Activated CD4-positive, alpha-beta T cell treated with anti-CD3 and anti-CD28 coated beads for 36 hours (primary cell): ENCODE measurements at regions of chr21 and their contacts with region 1.

Region 1: GRCh38 chr21:15586752-15587445 is 142.9 kb upstream of the USP25 start:
- DNase-seq: no peak
- ATAC-seq: no peak
- H3K4me3 Mint-ChIP-seq: no peak overlapping the region
- H3K27ac Mint-ChIP-seq: no peak overlapping the region
- H3K4me1 Mint-ChIP-seq: no peaks in the 10 kb centered on the region
- H3K27me3 Mint-ChIP-seq: no peaks in the 10 kb centered on the region

Region 2: GRCh38 chr21:14864211-14865021 is 722.5 kb before region 1 on chr21:
- CTCF ChIA-PET with region 1: interaction called, 3 read pairs
- POLR2A ChIA-PET with region 1: no interaction called
- intact Hi-C with region 1: loop called in 1 of 2 experiments (anchors 5 kb)
- DNase-seq: peak; percentile 77
- ATAC-seq: peak; percentile 88
- H3K4me3 Mint-ChIP-seq: no peak overlapping the region
- H3K27ac Mint-ChIP-seq: no peak overlapping the region
- H3K4me1 Mint-ChIP-seq: peaks cover 6% of the 10 kb centered on the region
- H3K27me3 Mint-ChIP-seq: peaks cover 2% of the 10 kb centered on the region

Region 3: GRCh38 chr21:15210235-15210739 is 376.6 kb before region 1 on chr21:
- CTCF ChIA-PET with region 1: no interaction called
- POLR2A ChIA-PET with region 1: no interaction called
- intact Hi-C with region 1: no loop called
- DNase-seq: no peak
- ATAC-seq: no peak
- H3K4me3 Mint-ChIP-seq: no peak overlapping the region
- H3K27ac Mint-ChIP-seq: no peak overlapping the region
- H3K4me1 Mint-ChIP-seq: no peaks in the 10 kb centered on the region
- H3K27me3 Mint-ChIP-seq: peaks cover 3% of the 10 kb centered on the region